GM10248 (cell line): ENCODE measurements at regions of chr13 and their contacts with region 1.

Region 1: GRCh38 chr13:39032150-39032549 is 5.7 kb downstream of the PROSER1 start:
- DNase-seq: no peak
- CTCF ChIP-seq: no peak

Region 2: DNA sequence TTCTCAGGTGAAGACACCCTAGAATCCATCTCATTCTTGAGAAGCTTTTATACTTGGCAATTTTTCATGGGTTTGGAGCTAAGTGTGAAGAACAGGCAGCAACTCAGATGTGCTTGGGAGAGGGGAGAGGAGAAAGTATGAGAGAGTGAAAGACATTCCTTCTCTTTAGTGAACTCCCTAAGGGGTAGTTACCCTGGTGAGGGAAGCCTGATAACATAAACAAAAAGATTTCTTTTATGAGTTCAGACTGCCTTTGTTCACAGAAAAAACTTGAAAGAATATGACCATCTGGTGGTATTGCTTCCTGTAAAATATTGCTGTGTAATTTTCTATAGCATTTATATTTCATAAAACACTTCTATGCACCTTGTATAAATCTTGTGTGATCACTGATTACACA is 41.5 kb before region 1 on chr13 and contains the start of gene STOML3:
- CTCF ChIA-PET with region 1: no interaction called
- POLR2A ChIA-PET with region 1: no interaction called
- DNase-seq: no peak
- CTCF ChIP-seq: no peak

Region 3: DNA sequence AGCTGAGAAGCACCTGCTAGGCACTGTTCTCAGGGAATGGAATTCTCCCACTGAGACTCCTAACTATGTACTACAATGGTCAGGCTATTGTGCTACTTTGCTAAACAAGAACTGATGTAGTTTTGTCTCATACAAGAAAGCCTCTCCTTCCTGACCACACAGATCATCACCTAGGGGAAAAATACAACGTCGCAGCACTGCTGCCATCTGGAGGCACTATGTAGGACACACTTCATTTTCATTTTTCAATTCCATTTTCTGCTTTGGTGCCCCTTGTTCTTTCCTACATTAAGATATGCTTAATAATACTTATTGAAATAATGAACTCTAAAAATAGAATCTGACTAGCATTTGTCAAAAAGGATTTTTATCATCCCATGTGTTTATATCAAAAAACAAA is 15.4 kb before region 1 on chr13:
- CTCF ChIA-PET with region 1: interaction called, 11 read pairs
- POLR2A ChIA-PET with region 1: no interaction called
- DNase-seq: peak; percentile 44
- CTCF ChIP-seq: peak; percentile 60